Astrocyte of the cerebellum (primary cell): ENCODE measurements at regions of chr2 and their contacts with region 1.

Region 1: DNA sequence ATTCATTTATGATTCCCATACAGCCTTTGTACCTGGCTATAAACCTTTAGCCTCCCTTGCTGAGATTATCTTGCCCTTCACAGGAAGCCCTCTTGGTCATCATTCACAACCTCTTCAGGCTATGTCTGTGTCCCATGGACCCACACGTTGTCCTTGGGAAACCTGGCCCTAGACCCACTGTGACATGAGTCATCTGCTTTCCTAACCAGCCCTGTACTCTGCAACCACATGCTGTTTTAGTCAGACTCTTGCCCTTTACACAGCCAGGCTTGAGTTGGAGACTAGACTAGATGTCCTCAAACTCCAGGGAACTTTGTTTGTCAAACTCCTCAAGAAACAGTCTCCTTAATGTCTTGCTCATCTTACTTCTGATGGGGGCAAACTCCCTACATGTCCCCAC is 229.3 kb upstream of the ZSWIM2 start:
- DNase-seq: peak; percentile 6
- H3K4me3 ChIP-seq: no peak overlapping the region
- CTCF ChIP-seq: no peak

Region 2: GRCh38 chr2:187037310-187037709 is 41.0 kb before region 1 on chr2:
- in situ Hi-C with region 1: loop called (anchors 5 kb)
- DNase-seq: no peak
- H3K4me3 ChIP-seq: no peak overlapping the region
- CTCF ChIP-seq: no peak